ENCODE measurements at regions of chr3 and their contacts with region 1.

Region 1: GRCh38 chr3:119380697-119381096 is 82.7 kb downstream of the TMEM39A start:
- DNase-seq: peak in 3 of 7 donors; percentile 15 to 40 (median 29)
- H3K4me3 ChIP-seq: no peak overlapping the region
- H3K27ac ChIP-seq: no peak overlapping the region
- H3K4me1 ChIP-seq: no peaks in the 10 kb centered on the region
- H3K27me3 ChIP-seq: no peaks in the 10 kb centered on the region
- CTCF ChIP-seq: peak in 1 of 6 experiments; percentile 9
- POLR2A ChIP-seq: no peak

Region 2: DNA sequence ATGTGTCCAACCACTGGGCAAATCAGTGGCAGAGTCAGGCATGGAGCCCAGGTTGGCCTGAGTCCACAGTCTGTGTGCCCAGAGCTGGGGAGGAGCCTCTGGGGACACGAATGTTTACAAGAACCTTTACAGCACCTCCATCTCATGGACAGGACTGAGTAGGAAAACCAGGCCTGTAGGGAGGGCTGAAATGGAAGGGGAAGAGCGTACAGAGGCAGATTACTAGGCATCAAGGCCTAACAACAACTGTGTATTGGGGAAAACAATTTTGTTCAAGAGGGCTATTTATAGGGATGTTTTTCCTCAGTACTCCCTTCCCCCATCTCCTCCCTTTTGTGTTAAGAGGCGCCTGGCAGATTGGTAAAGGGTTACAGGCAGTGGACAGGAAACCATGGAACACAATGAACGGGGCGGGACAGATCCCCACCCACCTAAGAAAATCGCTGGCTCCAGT is 101.6 kb before region 1 on chr3:
- intact Hi-C with region 1: loop called in 1 of 2 experiments (anchors 10 kb)
- DNase-seq: peak in 1 of 7 donors; percentile 25
- H3K4me3 ChIP-seq: no peak overlapping the region
- H3K27ac ChIP-seq: peak overlapping the region in 1 of 5 donors; percentile 75
- H3K4me1 ChIP-seq: no peaks in the 10 kb centered on the region
- H3K27me3 ChIP-seq: no peaks in the 10 kb centered on the region
- CTCF ChIP-seq: no peak
- POLR2A ChIP-seq: no peak

Region 3: GRCh38 chr3:119524931-119525662 is 144.4 kb after region 1 on chr3:
- intact Hi-C with region 1: no loop called
- DNase-seq: no peak
- H3K4me3 ChIP-seq: no peak overlapping the region
- H3K27ac ChIP-seq: peak overlapping the region in 1 of 5 donors; percentile 32
- H3K4me1 ChIP-seq: no peaks in the 10 kb centered on the region
- H3K27me3 ChIP-seq: no peaks in the 10 kb centered on the region
- CTCF ChIP-seq: peak in 5 of 6 experiments; percentile 19 to 55 (median 42)
- POLR2A ChIP-seq: no peak